Natural killer cell (primary cell): ENCODE measurements at regions of chr19 and their contacts with region 1.

Region 1: GRCh38 chr19:34712395-34713261 is 21.4 kb upstream of the ZNF181 start:
- DNase-seq: peak; percentile 28 to 91
- ATAC-seq: peak; percentile 69 to 80 (median 70)
- H3K4me3 ChIP-seq: no peak overlapping the region
- H3K4me3 Mint-ChIP-seq: no peak overlapping the region
- H3K27ac ChIP-seq: no peak overlapping the region
- H3K27ac Mint-ChIP-seq: no peak overlapping the region
- H3K4me1 ChIP-seq: no peaks in the 10 kb centered on the region
- H3K4me1 Mint-ChIP-seq: peaks cover 6% of the 10 kb centered on the region in 2 donors
- H3K27me3 ChIP-seq: peaks cover 2% of the 10 kb centered on the region
- H3K27me3 Mint-ChIP-seq: peaks cover 21 to 46% of the 10 kb centered on the region in 2 donors
- CTCF ChIP-seq: peak; percentile 75

Region 2: DNA sequence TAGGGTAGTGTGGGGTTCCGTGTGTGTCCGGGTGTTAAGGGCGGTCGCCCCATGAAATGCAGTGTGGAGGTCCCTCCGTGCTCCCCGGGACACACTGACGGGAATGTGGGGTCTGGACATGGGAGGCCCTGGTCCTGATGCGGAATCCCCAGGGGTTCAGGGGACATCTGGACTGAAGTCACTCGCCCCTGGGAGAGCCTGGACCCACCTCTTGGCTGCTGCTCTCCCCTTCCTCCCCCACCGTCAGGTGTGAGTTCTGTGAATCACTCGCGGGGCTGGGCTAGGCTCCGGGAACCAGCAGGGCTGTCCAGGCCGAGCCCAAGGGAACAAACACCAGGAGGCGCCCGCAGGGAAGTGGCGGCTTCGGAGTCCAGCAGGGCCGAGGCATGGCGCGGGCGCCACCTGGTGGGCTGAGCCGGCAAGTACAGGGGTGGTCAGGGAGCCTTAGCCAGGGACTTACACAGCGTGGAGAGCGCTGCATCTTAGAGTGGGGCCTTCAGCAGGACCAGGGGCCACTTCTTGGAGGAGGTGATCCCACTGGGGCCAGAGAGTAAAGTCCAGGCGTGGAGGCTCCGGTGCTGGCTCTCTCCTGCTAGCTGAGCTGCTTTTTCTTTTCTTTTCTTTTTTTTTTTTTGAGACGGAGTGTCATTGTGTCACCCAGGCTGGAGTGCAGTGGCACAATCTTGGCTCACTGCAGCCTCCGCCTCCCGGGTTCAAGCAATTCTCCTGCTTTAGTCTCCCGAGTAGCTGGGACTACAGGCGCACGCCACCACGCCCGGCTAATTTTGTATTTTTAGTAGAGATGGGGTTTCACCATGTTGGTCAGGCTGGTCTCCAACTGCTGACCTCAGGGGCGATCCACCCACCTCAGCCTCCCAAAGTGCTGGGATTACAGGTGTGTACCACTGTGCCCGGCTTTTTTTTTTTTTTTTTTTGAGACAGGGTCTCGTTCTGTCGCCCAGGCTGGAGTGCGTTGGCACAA is 211.0 kb before region 1 on chr19:
- intact Hi-C with region 1: loop called (anchors 1 kb)
- DNase-seq: peak; percentile 84 to 87
- ATAC-seq: peak; percentile 88 to 95 (median 91)
- H3K4me3 ChIP-seq: no peak overlapping the region
- H3K4me3 Mint-ChIP-seq: no peak overlapping the region
- H3K27ac ChIP-seq: no peak overlapping the region
- H3K27ac Mint-ChIP-seq: no peak overlapping the region
- H3K4me1 ChIP-seq: peaks cover 16% of the 10 kb centered on the region
- H3K4me1 Mint-ChIP-seq: peaks cover 0 to 6% of the 10 kb centered on the region in 2 donors
- H3K27me3 ChIP-seq: peaks cover 10% of the 10 kb centered on the region
- H3K27me3 Mint-ChIP-seq: no peaks in the 10 kb centered on the region
- CTCF ChIP-seq: peak; percentile 88

Region 3: DNA sequence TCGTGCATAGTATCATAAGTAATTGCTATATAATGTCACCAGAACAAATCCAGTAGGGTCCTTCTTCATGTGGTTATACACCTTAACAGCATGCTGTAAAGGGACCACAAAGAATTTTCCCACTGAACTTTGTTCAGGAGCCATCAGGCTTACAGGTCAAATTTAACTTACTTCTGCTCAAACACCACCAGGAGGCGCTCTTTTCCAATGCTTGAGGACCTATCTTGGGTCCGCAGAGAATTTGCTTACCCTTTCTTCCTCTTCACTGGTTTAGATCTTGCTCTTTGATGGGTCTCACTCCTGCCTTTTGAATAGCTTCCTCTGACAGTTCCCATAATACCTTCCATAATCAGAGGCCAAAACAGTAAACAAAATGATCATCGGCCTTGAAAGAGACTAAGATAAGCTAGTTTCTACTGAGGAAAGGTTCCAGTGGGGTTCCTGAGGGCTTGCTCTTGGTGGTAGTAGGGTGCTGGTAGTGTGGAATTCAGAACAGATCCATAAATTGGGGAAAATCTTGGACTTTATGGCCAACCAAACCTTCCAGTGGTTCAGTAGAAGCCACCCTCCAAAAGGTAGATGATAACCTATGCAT is 73.0 kb before region 1 on chr19:
- intact Hi-C with region 1: loop called (anchors 1 kb)
- DNase-seq: peak in 1 of 2 donors; percentile 92
- ATAC-seq: peak; percentile 55 to 66 (median 64)
- H3K4me3 ChIP-seq: no peak overlapping the region
- H3K4me3 Mint-ChIP-seq: no peak overlapping the region
- H3K27ac ChIP-seq: no peak overlapping the region
- H3K27ac Mint-ChIP-seq: no peak overlapping the region
- H3K4me1 ChIP-seq: no peaks in the 10 kb centered on the region
- H3K4me1 Mint-ChIP-seq: no peaks in the 10 kb centered on the region
- H3K27me3 ChIP-seq: no peaks in the 10 kb centered on the region
- H3K27me3 Mint-ChIP-seq: no peaks in the 10 kb centered on the region
- CTCF ChIP-seq: peak; percentile 81

Region 4: GRCh38 chr19:34692549-34692948 is 20.1 kb before region 1 on chr19:
- intact Hi-C with region 1: no loop called
- DNase-seq: no peak
- ATAC-seq: no peak
- H3K4me3 ChIP-seq: no peak overlapping the region
- H3K4me3 Mint-ChIP-seq: no peak overlapping the region
- H3K27ac ChIP-seq: no peak overlapping the region
- H3K27ac Mint-ChIP-seq: no peak overlapping the region
- H3K4me1 ChIP-seq: no peaks in the 10 kb centered on the region
- H3K4me1 Mint-ChIP-seq: no peaks in the 10 kb centered on the region
- H3K27me3 ChIP-seq: no peaks in the 10 kb centered on the region
- H3K27me3 Mint-ChIP-seq: peaks cover 14 to 44% of the 10 kb centered on the region in 2 donors
- CTCF ChIP-seq: no peak